ENCODE measurements at regions of chr9 and their contacts with region 1.

Region 1: GRCh38 chr9:113150670-113151611 is at the start of gene SLC31A2:
- DNase-seq: peak; percentile 56 to 93
- H3K4me3 ChIP-seq: peak within 1 kb of the TSS; percentile 83 to 95
- H3K27ac ChIP-seq: peak within 1 kb of the TSS; percentile 68 to 82
- H3K4me1 ChIP-seq: peaks cover 0 to 9% of the 10 kb centered on the region in 2 donors
- H3K27me3 ChIP-seq: no peaks in the 10 kb centered on the region
- CTCF ChIP-seq: peak in 2 of 3 experiments; percentile 28 to 41
- total RNA-seq, gene SLC31A2: 7.2 TPM

Region 2: GRCh38 chr9:112620388-112620787 is 530.6 kb before region 1 on chr9:
- intact Hi-C with region 1: no loop called
- DNase-seq: no peak
- H3K4me3 ChIP-seq: no peak overlapping the region
- H3K27ac ChIP-seq: no peak overlapping the region
- H3K4me1 ChIP-seq: no peaks in the 10 kb centered on the region
- H3K27me3 ChIP-seq: no peaks in the 10 kb centered on the region
- CTCF ChIP-seq: no peak

Region 3: GRCh38 chr9:113210815-113211214 is 59.9 kb after region 1 on chr9:
- intact Hi-C with region 1: no loop called
- DNase-seq: no peak
- H3K4me3 ChIP-seq: no peak overlapping the region
- H3K27ac ChIP-seq: no peak overlapping the region
- H3K4me1 ChIP-seq: no peaks in the 10 kb centered on the region
- H3K27me3 ChIP-seq: no peaks in the 10 kb centered on the region
- CTCF ChIP-seq: no peak

Region 4: DNA sequence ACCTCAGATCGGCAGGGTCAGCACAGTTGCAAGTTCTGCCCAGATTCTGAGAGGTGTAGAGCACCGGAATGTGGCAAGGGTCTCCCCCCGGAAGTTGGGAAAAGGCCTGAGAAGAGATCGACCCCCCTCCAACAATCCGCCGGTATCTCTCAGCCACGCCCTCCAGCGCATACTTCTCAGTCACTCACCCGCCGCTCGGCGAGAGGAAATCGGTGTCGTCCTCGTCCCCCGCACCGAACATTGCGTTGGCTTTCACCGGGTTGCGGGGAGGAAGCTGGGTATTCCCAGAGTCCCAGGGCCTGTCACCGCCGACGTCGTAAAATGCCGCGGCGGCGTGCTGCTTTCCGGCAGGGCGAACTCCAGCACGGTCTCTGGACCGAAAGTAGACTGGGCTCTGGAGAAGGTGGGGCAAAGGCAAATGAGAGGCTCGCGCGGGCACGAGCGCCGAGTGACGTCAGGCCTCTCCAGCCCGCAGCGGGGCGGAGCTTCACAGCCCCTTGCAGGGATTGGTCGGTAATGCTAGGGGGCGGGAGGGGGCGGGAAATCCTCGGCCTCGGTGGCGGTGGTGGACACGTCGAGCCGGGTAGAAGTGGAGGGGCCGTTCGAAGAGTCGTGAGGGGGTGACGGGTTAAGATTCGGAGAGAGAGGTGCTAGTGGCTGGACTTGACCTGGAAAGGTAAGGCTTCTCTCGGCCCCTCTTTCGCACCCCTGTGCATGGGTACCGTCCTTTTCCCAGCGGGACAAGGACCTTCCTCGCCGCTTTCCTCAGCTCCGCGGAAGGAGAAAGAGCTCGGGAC is 70.3 kb after region 1 on chr9 and contains the starts of genes FKBP15 and SLC31A1:
- intact Hi-C with region 1: loop called (anchors 2 kb)
- DNase-seq: peak; percentile 95 to 99
- H3K4me3 ChIP-seq: peak within 1 kb of the TSS; percentile 92 to 99
- H3K27ac ChIP-seq: peak within 1 kb of the TSS; percentile 79 to 85
- H3K4me1 ChIP-seq: peaks cover 10 to 19% of the 10 kb centered on the region in 2 donors
- H3K27me3 ChIP-seq: no peaks in the 10 kb centered on the region
- CTCF ChIP-seq: no peak
- total RNA-seq, gene FKBP15: 24.4 TPM
- total RNA-seq, gene SLC31A1: 3.7 TPM